ENCODE measurements at regions of chr10 and their contacts with region 1.

Region 1: DNA sequence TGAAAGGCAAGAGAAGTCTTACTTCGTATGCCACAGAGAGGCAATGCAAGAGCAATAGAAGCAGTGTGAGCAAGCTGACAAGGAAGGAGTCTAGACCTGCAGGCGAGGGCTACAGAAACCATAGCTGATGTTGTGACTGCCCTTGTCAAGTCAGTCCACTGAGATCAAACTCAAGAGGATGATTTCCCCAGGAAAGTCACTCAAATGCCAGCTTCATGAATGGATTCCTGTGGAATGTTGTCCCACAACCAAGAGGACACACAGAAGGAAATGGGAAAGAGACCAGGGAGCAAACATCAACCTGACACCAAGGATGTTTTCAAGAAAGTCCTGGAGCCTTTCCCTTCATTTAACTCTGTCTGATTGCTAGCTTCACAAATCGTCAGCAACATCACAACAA is 78.0 kb upstream of the GAD2 start:
- DNase-seq: no peak
- ATAC-seq: no peak

Region 2: GRCh38 chr10:26508016-26508415 is 369.4 kb after region 1 on chr10:
- intact Hi-C with region 1: loop called (anchors 5 kb)
- DNase-seq: no peak
- ATAC-seq: no peak

Measured in Right ventricle myocardium inferior (tissue), 1 donor.